AG04450 (cell line): ENCODE measurements at regions of chr3 and their contacts with region 1.

Region 1: DNA sequence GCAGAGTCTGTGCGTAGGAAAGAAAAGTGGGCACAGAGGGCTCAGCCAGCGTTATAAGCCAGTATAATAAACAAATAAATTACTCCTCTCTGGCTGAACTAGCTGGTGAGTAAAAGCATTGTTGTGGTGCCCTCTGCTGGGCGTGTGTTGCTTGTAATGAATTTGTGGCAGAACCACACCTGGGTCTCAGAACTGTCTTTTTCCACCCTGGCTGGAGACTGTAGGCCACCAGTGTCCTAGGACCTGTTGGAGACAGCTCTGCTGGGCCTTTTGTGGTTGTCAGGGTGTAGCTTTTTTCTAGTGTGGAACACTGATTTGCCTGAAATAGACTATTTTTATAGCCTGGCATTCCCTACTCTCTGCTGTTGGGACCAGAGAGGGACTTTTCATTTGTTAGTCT is 130.5 kb upstream of the EIF1B start:
- DNase-seq: peak; percentile 27
- H3K4me3 ChIP-seq: no peak overlapping the region
- H3K27ac ChIP-seq: no peak overlapping the region
- H3K27me3 ChIP-seq: no peaks in the 10 kb centered on the region
- CTCF ChIP-seq: peak; percentile 77

Region 2: DNA sequence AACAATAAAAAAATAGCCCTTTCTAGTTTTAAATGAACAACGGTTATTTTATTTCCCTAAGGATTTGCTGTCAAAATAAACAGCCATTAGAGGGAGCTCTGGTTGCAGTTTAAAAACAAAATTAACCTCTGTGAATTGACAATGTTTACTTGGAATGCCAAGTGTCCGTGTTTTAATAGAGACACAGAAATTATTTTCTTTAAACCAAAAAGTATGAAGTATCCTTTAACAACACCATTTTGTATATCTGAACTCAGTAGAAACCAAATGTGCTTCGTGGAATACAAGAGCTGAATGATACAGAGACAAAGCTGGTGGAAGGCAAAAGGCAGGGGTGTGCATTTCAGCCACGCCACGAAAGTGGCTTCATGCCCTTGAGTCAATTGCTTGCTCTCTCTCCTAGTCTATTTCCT is 637.1 kb before region 1 on chr3:
- CTCF ChIA-PET with region 1: interaction called, 121 read pairs
- POLR2A ChIA-PET with region 1: no interaction called
- DNase-seq: no peak
- H3K4me3 ChIP-seq: no peak overlapping the region
- H3K27ac ChIP-seq: no peak overlapping the region
- H3K27me3 ChIP-seq: no peaks in the 10 kb centered on the region
- CTCF ChIP-seq: peak; percentile 61

Region 3: GRCh38 chr3:39668420-39668819 is 510.6 kb before region 1 on chr3:
- CTCF ChIA-PET with region 1: interaction called, 15 read pairs
- POLR2A ChIA-PET with region 1: no interaction called
- DNase-seq: peak; percentile 15
- H3K4me3 ChIP-seq: no peak overlapping the region
- H3K27ac ChIP-seq: no peak overlapping the region
- H3K27me3 ChIP-seq: no peaks in the 10 kb centered on the region
- CTCF ChIP-seq: peak; percentile 64

Region 4: DNA sequence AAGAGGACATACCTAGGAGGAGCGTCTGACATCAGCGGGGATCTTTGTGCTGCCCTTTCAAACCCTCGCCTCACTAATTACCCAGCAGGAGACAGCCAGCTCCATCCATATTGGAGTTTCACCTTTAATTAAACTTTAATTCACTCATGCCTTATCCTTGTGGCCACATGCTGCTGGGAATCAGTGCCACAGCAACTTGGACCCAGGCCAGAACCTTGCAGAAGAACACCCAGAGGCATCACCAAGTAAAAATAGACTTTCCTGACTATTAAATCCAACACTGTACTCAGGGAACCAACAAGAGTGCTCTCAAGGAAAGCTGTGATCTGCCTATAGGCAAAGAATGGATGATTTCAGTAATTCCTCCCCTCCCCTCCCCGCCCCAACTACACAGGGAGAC is 154.4 kb after region 1 on chr3:
- CTCF ChIA-PET with region 1: no interaction called
- POLR2A ChIA-PET with region 1: no interaction called
- DNase-seq: no peak
- H3K4me3 ChIP-seq: no peak overlapping the region
- H3K27ac ChIP-seq: no peak overlapping the region
- H3K27me3 ChIP-seq: peaks cover 5% of the 10 kb centered on the region
- CTCF ChIP-seq: no peak